Naive thymus-derived CD4-positive, alpha-beta T cell (primary cell): ENCODE measurements at regions of chr5 and their contacts with region 1.

Region 1: GRCh38 chr5:65102828-65103711 is 334.3 kb downstream of the CWC27 start:
- DNase-seq: peak; percentile 44 to 67 (median 57)
- ATAC-seq: peak; percentile 78
- H3K4me3 ChIP-seq: peak overlapping the region; percentile 63
- H3K4me3 Mint-ChIP-seq: peak overlapping the region; percentile 82 to 93 (median 87)
- H3K27ac ChIP-seq: peak overlapping the region; percentile 82
- H3K27ac Mint-ChIP-seq: peak overlapping the region; percentile 83 to 96 (median 92)
- H3K4me1 ChIP-seq: peaks cover 12% of the 10 kb centered on the region in 2 donors
- H3K4me1 Mint-ChIP-seq: peaks cover 32 to 52% (median 41%) of the 10 kb centered on the region in 7 donors
- H3K27me3 ChIP-seq: no peaks in the 10 kb centered on the region
- H3K27me3 Mint-ChIP-seq: peaks cover 0 to 22% (median 0%) of the 10 kb centered on the region in 5 donors

Region 2: GRCh38 chr5:64811050-64811640 is 291.9 kb before region 1 on chr5:
- CTCF ChIA-PET with region 1: interaction called, 4 read pairs
- POLR2A ChIA-PET with region 1: no interaction called
- intact Hi-C with region 1: loop called (anchors 2 to 5 kb)
- DNase-seq: peak in 7 of 9 donors; percentile 1 to 38 (median 21)
- ATAC-seq: peak; percentile 50
- H3K4me3 ChIP-seq: no peak overlapping the region
- H3K4me3 Mint-ChIP-seq: no peak overlapping the region
- H3K27ac ChIP-seq: no peak overlapping the region
- H3K27ac Mint-ChIP-seq: peak overlapping the region in 1 of 9 donors; percentile 33
- H3K4me1 ChIP-seq: no peaks in the 10 kb centered on the region
- H3K4me1 Mint-ChIP-seq: peaks cover 0 to 3% (median 0%) of the 10 kb centered on the region in 7 donors
- H3K27me3 ChIP-seq: no peaks in the 10 kb centered on the region
- H3K27me3 Mint-ChIP-seq: no peaks in the 10 kb centered on the region

Region 3: DNA sequence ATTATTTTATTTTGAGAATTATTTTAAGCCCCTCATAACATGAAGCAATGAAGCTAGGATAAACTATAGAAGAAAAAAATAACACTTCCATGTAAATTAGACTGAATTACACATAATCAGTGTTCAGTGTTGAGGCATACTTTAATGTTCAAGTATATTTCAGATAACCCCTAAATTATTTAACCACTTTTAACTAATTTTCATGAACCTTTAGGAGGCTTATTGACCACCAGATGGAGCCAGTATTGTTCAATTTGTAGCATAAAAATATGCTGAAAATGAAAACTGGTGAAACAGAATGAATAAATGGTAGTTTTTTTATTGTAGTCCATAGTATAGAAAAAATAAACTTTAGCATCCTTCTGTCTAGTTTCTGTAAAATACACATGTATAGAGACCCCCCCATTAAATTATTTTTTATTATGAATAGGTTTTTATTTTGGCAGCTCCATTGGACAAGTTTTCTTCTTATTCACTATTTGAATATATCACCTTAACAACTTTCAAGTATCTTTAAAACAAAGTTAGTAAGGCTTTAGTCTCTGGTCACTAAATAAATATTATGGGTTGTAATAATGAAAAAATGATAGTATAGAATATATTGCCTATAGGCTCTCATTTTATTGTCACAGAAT is 144.2 kb before region 1 on chr5:
- CTCF ChIA-PET with region 1: interaction called, 4 read pairs
- POLR2A ChIA-PET with region 1: no interaction called
- intact Hi-C with region 1: loop called in 1 of 2 experiments (anchors 2 kb)
- DNase-seq: peak in 5 of 9 donors; percentile 3 to 20 (median 9)
- ATAC-seq: no peak
- H3K4me3 ChIP-seq: no peak overlapping the region
- H3K4me3 Mint-ChIP-seq: no peak overlapping the region
- H3K27ac ChIP-seq: no peak overlapping the region
- H3K27ac Mint-ChIP-seq: no peak overlapping the region
- H3K4me1 ChIP-seq: no peaks in the 10 kb centered on the region
- H3K4me1 Mint-ChIP-seq: no peaks in the 10 kb centered on the region
- H3K27me3 ChIP-seq: no peaks in the 10 kb centered on the region
- H3K27me3 Mint-ChIP-seq: peaks cover 0 to 3% (median 0%) of the 10 kb centered on the region in 5 donors

Region 4: DNA sequence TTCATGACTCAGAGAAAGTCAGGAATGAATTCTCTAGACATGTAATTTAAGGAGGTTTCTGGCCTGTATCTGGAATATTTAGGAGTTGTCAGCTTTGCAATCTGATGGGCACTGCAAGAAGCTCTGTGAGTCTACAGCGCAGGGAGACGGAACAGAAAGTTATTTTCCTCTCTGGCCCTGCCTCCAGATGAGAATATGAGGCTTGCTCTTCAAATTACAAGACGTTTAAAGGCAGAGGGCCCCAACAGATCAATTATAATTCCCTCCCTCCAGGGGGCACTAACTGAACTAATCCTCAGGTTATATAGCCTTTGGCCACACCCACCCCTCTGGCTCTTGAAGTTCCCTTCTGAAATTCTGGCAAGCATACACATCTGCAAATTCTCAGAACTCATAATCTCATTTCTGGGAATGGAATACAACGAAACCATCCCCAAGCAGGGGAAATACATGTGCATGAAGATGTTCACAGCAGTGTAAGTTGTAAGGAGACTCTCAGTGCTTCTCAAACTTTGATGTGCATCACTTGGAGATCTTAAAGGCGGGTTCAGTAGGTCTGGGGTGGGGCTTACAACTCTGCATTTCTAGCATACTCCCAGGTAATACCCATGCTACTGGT is 26.7 kb before region 1 on chr5:
- CTCF ChIA-PET with region 1: no interaction called
- POLR2A ChIA-PET with region 1: interaction called, 3 read pairs
- intact Hi-C with region 1: loop called (anchors 1 to 2 kb)
- DNase-seq: peak in 8 of 9 donors; percentile 26 to 66 (median 46)
- ATAC-seq: peak; percentile 89
- H3K4me3 ChIP-seq: no peak overlapping the region
- H3K4me3 Mint-ChIP-seq: no peak overlapping the region
- H3K27ac ChIP-seq: no peak overlapping the region
- H3K27ac Mint-ChIP-seq: peak overlapping the region in 5 of 9 donors; percentile 2 to 78 (median 39)
- H3K4me1 ChIP-seq: no peaks in the 10 kb centered on the region
- H3K4me1 Mint-ChIP-seq: peaks cover 2 to 23% (median 17%) of the 10 kb centered on the region in 7 donors
- H3K27me3 ChIP-seq: no peaks in the 10 kb centered on the region
- H3K27me3 Mint-ChIP-seq: peaks cover 0 to 17% (median 0%) of the 10 kb centered on the region in 5 donors

Region 5: DNA sequence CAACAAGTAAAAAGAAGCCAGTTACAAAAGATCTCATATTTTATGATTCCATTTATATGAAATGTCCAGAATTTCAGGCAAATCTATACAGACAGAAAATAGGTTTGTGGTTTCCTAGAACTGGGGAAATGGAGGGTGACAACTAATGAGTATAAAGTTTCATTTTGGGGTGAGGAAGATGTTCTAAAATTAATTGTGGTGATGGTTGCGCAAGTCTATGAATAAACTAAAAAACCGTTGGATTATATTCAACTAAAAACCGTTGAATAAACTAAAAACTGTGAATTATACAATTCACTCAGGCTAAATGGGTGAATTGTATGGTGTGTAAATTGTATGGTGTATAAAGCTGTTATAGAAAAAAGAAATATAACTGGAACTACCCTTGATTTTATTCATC is 331.1 kb after region 1 on chr5:
- CTCF ChIA-PET with region 1: no interaction called
- POLR2A ChIA-PET with region 1: no interaction called
- intact Hi-C with region 1: no loop called
- DNase-seq: no peak
- ATAC-seq: no peak
- H3K4me3 ChIP-seq: no peak overlapping the region
- H3K4me3 Mint-ChIP-seq: no peak overlapping the region
- H3K27ac ChIP-seq: no peak overlapping the region
- H3K27ac Mint-ChIP-seq: no peak overlapping the region
- H3K4me1 ChIP-seq: no peaks in the 10 kb centered on the region
- H3K4me1 Mint-ChIP-seq: peaks cover 0 to 1% (median 0%) of the 10 kb centered on the region in 7 donors
- H3K27me3 ChIP-seq: no peaks in the 10 kb centered on the region
- H3K27me3 Mint-ChIP-seq: peaks cover 0 to 3% (median 0%) of the 10 kb centered on the region in 5 donors

Region 6: GRCh38 chr5:65624571-65625555 is 521.8 kb after region 1 on chr5 and contains the starts of genes SHLD3 and TRAPPC13:
- CTCF ChIA-PET with region 1: no interaction called
- POLR2A ChIA-PET with region 1: interaction called, 3 read pairs
- intact Hi-C with region 1: loop called in 1 of 2 experiments (anchors 2 kb)
- DNase-seq: peak; percentile 57 to 92 (median 91)
- ATAC-seq: peak; percentile 86
- H3K4me3 ChIP-seq: peak within 1 kb of the TSS; percentile 75
- H3K4me3 Mint-ChIP-seq: peak within 1 kb of the TSS; percentile 93 to 100 (median 98)
- H3K27ac ChIP-seq: peak within 1 kb of the TSS; percentile 92
- H3K27ac Mint-ChIP-seq: peak within 1 kb of the TSS; percentile 97 to 100 (median 98)
- H3K4me1 ChIP-seq: peaks cover 20% of the 10 kb centered on the region in 2 donors
- H3K4me1 Mint-ChIP-seq: peaks cover 14 to 73% (median 51%) of the 10 kb centered on the region in 7 donors
- H3K27me3 ChIP-seq: no peaks in the 10 kb centered on the region
- H3K27me3 Mint-ChIP-seq: peaks cover 0 to 3% (median 0%) of the 10 kb centered on the region in 5 donors
- total RNA-seq, gene SHLD3: 4.8 to 11.3 (median 5.8) TPM
- total RNA-seq, gene TRAPPC13: 18.2 to 23.1 (median 20.8) TPM